WTC11 (cell line): ENCODE measurements at regions of chr1 and their contacts with region 1.

Region 1: DNA sequence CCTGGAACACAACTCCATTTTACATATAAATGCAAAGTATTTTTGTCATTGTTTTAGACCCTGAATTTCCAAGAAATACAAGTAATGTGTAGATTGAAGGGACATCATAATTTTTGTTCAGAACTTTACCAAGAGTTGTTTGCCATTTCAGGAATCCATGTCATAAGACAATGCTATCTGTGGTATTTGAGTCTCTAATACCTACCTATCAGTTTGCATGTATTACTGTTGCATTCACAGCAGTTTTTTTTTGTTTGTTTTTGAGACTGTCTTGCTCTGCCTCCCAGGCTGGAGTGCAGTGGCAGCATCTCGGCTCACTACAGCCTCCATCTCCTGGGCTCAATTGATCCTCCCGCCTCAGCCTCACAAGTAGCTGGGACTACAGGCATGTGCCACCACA is 17.1 kb downstream of the MPZ start:
- DNase-seq: no peak
- ATAC-seq: no peak
- H3K4me3 Mint-ChIP-seq: no peak overlapping the region
- H3K27ac Mint-ChIP-seq: no peak overlapping the region
- H3K4me1 Mint-ChIP-seq: peaks cover 4% of the 10 kb centered on the region; the same call in 1 of the 2 replicates
- H3K27me3 Mint-ChIP-seq: no peaks in the 10 kb centered on the region
- CTCF ChIP-seq: no peak

Region 2: DNA sequence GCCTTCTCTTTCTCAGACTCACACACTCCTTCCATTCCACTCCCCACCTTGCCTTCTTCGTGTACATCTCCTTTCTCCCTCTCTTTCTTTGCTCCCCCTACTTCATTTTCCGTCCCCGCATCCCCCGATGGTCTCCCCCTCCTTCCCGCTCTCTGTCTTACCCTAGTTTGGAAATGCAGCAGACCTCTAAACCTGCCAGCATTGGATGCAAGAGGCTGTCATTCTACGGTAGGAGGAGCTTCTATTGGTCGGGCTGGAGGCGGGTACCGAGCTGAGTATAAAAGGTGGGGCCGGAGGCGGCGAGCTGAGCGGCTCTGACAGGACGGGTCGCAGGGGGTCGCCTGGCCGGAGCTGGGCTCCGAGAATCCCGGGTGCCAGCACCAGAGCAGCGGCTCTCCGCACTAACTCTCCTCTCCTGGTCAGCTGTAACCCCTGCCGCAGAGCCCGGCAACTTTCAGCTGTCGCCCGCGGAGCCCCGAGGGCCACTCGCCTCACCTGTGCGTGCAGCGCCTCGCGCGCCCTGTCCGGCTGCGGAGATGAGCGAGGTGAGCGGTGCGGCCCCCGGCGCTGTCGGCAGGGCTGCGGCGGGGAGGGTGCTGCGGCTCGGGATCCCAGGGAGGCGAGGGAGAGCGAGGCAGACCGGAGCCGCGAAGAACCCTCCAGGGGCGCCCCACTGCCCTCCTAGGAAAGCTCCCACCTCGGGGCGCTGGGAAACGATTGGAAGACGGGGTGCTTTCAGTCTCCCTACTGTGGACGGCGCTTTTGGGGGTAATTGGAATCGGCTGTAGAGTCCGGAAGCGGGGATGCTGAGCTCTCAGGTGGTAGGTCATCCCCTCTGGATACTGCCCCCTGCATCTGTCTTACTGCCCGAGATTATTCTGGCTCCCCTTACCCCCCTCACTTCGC is 33.9 kb before region 1 on chr1 and contains the start of gene PCP4L1:
- CTCF ChIA-PET with region 1: interaction called, 13 read pairs
- POLR2A ChIA-PET with region 1: interaction called, 4 read pairs
- DNase-seq: peak; percentile 87
- ATAC-seq: peak; percentile 97
- H3K4me3 Mint-ChIP-seq: peak within 1 kb of the TSS; percentile 65
- H3K27ac Mint-ChIP-seq: no peak within 1 kb of the TSS
- H3K4me1 Mint-ChIP-seq: peaks cover 22% of the 10 kb centered on the region
- H3K27me3 Mint-ChIP-seq: peaks cover 70% of the 10 kb centered on the region
- CTCF ChIP-seq: no peak
- total RNA-seq, gene PCP4L1: 0.92 to 1.2 TPM (median 1.1 TPM) in 3 replicates